Activated B cell treated with CpG ODN at 0.5 μM for 24 hours (primary cell): ENCODE measurements at regions of chr3 and their contacts with region 1.

Region 1: GRCh38 chr3:112390783-112391641 is 58.1 kb downstream of the CD200 start:
- DNase-seq: no peak
- ATAC-seq: no peak
- H3K4me3 Mint-ChIP-seq: no peak overlapping the region
- H3K27ac Mint-ChIP-seq: peak overlapping the region; percentile 78
- H3K4me1 Mint-ChIP-seq: peaks cover 40% of the 10 kb centered on the region
- H3K27me3 Mint-ChIP-seq: no peaks in the 10 kb centered on the region
- CTCF ChIP-seq: no peak

Region 2: GRCh38 chr3:112350181-112350825 is 40.7 kb before region 1 on chr3:
- CTCF ChIA-PET with region 1: no interaction called
- POLR2A ChIA-PET with region 1: no interaction called
- intact Hi-C with region 1: loop called (anchors 5 kb)
- DNase-seq: no peak
- ATAC-seq: no peak
- H3K4me3 Mint-ChIP-seq: no peak overlapping the region
- H3K27ac Mint-ChIP-seq: no peak overlapping the region
- H3K4me1 Mint-ChIP-seq: peaks cover 46% of the 10 kb centered on the region
- H3K27me3 Mint-ChIP-seq: no peaks in the 10 kb centered on the region
- CTCF ChIP-seq: no peak

Region 3: GRCh38 chr3:112371569-112371968 is 19.4 kb before region 1 on chr3:
- CTCF ChIA-PET with region 1: no interaction called
- POLR2A ChIA-PET with region 1: interaction called, 8 read pairs
- intact Hi-C with region 1: loop called (anchors 2 kb)
- DNase-seq: no peak
- ATAC-seq: no peak
- H3K4me3 Mint-ChIP-seq: no peak overlapping the region
- H3K27ac Mint-ChIP-seq: no peak overlapping the region
- H3K4me1 Mint-ChIP-seq: peaks cover 31% of the 10 kb centered on the region
- H3K27me3 Mint-ChIP-seq: no peaks in the 10 kb centered on the region
- CTCF ChIP-seq: no peak

Region 4: GRCh38 chr3:112376996-112377395 is 14.0 kb before region 1 on chr3:
- CTCF ChIA-PET with region 1: no interaction called
- POLR2A ChIA-PET with region 1: interaction called, 8 read pairs
- intact Hi-C with region 1: loop called (anchors 2 kb)
- DNase-seq: no peak
- ATAC-seq: peak; percentile 71
- H3K4me3 Mint-ChIP-seq: no peak overlapping the region
- H3K27ac Mint-ChIP-seq: no peak overlapping the region
- H3K4me1 Mint-ChIP-seq: peaks cover 56% of the 10 kb centered on the region
- H3K27me3 Mint-ChIP-seq: no peaks in the 10 kb centered on the region
- CTCF ChIP-seq: no peak

Region 5: DNA sequence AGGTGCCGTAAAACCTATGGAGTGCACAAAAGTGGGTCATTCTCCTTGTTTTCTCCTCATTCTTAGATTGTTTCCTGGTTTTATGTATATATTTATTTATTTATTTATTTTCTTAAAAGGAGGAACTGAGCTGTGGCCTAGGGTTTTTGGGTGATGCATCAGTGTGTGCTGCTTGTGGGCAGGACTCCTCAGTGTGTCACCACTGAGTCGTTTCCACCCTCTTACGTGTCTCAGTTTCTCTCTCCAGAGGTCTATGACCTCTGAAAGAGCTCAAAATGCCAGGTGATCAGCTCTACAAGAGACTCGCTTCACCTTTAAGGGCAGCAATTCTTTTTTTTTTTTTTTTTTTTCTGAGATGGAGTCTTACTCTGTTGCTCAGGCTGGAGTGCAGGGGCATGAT is 14.8 kb after region 1 on chr3:
- CTCF ChIA-PET with region 1: no interaction called
- POLR2A ChIA-PET with region 1: interaction called, 4 read pairs
- intact Hi-C with region 1: loop called (anchors 1 kb)
- DNase-seq: no peak
- ATAC-seq: no peak
- H3K4me3 Mint-ChIP-seq: no peak overlapping the region
- H3K27ac Mint-ChIP-seq: peak overlapping the region; percentile 68
- H3K4me1 Mint-ChIP-seq: peaks cover 31% of the 10 kb centered on the region
- H3K27me3 Mint-ChIP-seq: no peaks in the 10 kb centered on the region
- CTCF ChIP-seq: no peak

Region 6: GRCh38 chr3:112425858-112426750 is 35.1 kb after region 1 on chr3:
- CTCF ChIA-PET with region 1: no interaction called
- POLR2A ChIA-PET with region 1: no interaction called
- intact Hi-C with region 1: loop called (anchors 5 kb)
- DNase-seq: no peak
- ATAC-seq: peak; percentile 72
- H3K4me3 Mint-ChIP-seq: peak overlapping the region; percentile 58
- H3K27ac Mint-ChIP-seq: peak overlapping the region; percentile 92
- H3K4me1 Mint-ChIP-seq: peaks cover 44% of the 10 kb centered on the region
- H3K27me3 Mint-ChIP-seq: no peaks in the 10 kb centered on the region
- CTCF ChIP-seq: no peak